H1 (cell line): ENCODE measurements at regions of chr11 and their contacts with region 1.

Region 1: DNA sequence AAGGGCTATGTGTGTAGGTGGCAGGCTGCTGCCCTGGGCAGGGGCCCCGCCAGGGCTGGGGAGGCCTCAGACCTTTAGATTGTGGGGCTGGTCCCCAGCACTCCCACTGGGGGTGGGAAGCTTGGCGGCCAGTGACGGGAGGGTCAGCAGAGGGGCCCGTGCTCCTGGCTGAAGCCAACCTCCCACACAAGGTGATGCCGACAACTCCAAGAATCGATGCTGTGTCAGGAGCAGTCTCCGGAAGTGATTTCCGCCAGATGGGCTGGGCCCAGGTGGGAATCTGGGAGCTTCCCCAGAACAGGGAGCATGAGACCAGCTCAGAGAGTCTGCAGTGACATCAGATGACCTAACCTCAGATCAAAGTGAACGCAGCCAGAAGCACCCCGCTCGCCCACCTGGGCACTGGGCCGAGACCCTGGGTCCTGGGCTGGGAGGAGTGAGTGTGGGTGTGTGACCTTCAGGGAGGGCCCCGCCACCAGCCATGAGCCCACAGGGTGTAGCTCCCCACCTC is 7.7 kb downstream of the TRPM5 start:
- DNase-seq: no peak
- H3K4me3 ChIP-seq: no peak overlapping the region
- H3K27ac ChIP-seq: no peak overlapping the region
- H3K4me1 ChIP-seq: no peaks in the 10 kb centered on the region; a peak in 1 of 7 replicates
- H3K27me3 ChIP-seq: peaks cover 2 to 13% (median 8%) of the 10 kb centered on the region in 4 experiments; a peak in 6 of 7 replicates
- CTCF ChIP-seq: no peak
- EP300 ChIP-seq: no peak
- POLR2A ChIP-seq: no peak
- RAD21 ChIP-seq: no peak

Region 2: DNA sequence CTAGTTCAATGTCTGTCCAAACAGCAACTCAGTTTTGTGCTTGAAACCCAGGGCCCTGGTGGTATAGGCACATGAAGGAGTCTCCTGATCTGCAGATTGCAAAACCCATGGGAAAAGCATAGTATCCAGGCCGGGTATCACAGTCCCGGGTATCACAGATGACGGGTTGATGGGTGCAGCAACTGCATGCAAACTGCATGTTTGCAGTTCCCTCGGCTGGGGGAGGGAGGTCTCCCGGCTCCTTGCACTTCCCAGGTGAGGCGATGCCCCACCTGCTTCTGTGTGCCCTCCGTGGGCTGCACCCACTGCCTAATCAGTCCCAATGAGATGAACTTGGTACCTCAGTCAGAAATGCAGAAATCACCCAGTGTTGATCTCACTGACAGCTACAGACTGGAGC is 62.2 kb after region 1 on chr11:
- CTCF ChIA-PET with region 1: no interaction called
- POLR2A ChIA-PET with region 1: no interaction called
- DNase-seq: no peak
- H3K4me3 ChIP-seq: no peak overlapping the region
- H3K27ac ChIP-seq: no peak overlapping the region
- H3K4me1 ChIP-seq: peaks cover 0 to 2% (median 0%) of the 10 kb centered on the region in 4 experiments; a peak in 1 of 7 replicates
- H3K27me3 ChIP-seq: peaks cover 3 to 12% (median 7%) of the 10 kb centered on the region in 4 experiments
- CTCF ChIP-seq: no peak
- EP300 ChIP-seq: no peak
- POLR2A ChIP-seq: no peak
- RAD21 ChIP-seq: no peak

Region 3: GRCh38 chr11:2526808-2527381 is 90.3 kb after region 1 on chr11:
- CTCF ChIA-PET with region 1: interaction called, 37 read pairs
- POLR2A ChIA-PET with region 1: no interaction called
- DNase-seq: peak in 1 of 2 experiments; percentile 60
- H3K4me3 ChIP-seq: no peak overlapping the region
- H3K27ac ChIP-seq: no peak overlapping the region
- H3K4me1 ChIP-seq: peaks cover 0 to 2% (median 0%) of the 10 kb centered on the region in 4 experiments; a peak in 3 of 7 replicates
- H3K27me3 ChIP-seq: peaks cover 0 to 23% (median 4%) of the 10 kb centered on the region in 4 experiments; a peak in 4 of 7 replicates
- CTCF ChIP-seq: peak in 1 of 3 experiments; percentile 14; a peak in 2 of 4 replicates
- EP300 ChIP-seq: no peak
- POLR2A ChIP-seq: no peak
- RAD21 ChIP-seq: peak in 1 of 2 experiments; percentile 16; a peak in 1 of 4 replicates